HepG2 (cell line): ENCODE measurements at regions of chr10 and their contacts with region 1.

Region 1: GRCh38 chr10:45672181-45673073 is at the start of gene ZFAND4:
- DNase-seq: peak; percentile 93
- ATAC-seq: peak; percentile 97
- H3K4me3 ChIP-seq: peak within 1 kb of the TSS; percentile 62 to 84 (median 82)
- H3K27ac ChIP-seq: peak within 1 kb of the TSS; percentile 80
- H3K4me1 ChIP-seq: peaks cover 23% of the 10 kb centered on the region
- H3K27me3 ChIP-seq: no peaks in the 10 kb centered on the region
- CTCF ChIP-seq: peak; percentile 81
- EP300 ChIP-seq: peak; percentile 17 to 24; a peak in 2 of 4 replicates
- POLR2A ChIP-seq: peak; percentile 53 to 55
- RAD21 ChIP-seq: peak; percentile 100
- total RNA-seq, gene ZFAND4: 9.2 and 9.7 TPM in 2 replicates

Region 2: GRCh38 chr10:45235798-45236231 is 436.6 kb before region 1 on chr10:
- CTCF ChIA-PET with region 1: no interaction called
- POLR2A ChIA-PET with region 1: no interaction called
- in situ Hi-C with region 1: loop called (anchors 25 kb)
- intact Hi-C with region 1: loop called (anchors 2 kb)
- DNase-seq: no peak
- ATAC-seq: peak; percentile 63
- H3K4me3 ChIP-seq: no peak overlapping the region
- H3K27ac ChIP-seq: no peak overlapping the region
- H3K4me1 ChIP-seq: peaks cover 7% of the 10 kb centered on the region; the same call in 1 of the 2 replicates
- H3K27me3 ChIP-seq: peaks cover 0 to 15% of the 10 kb centered on the region in 2 experiments; a peak in 3 of 5 replicates
- CTCF ChIP-seq: no peak
- EP300 ChIP-seq: no peak
- POLR2A ChIP-seq: no peak
- RAD21 ChIP-seq: no peak

Region 3: GRCh38 chr10:45249978-45250693 is 422.3 kb before region 1 on chr10:
- CTCF ChIA-PET with region 1: no interaction called
- POLR2A ChIA-PET with region 1: no interaction called
- in situ Hi-C with region 1: loop called (anchors 25 kb)
- intact Hi-C with region 1: no loop called
- DNase-seq: peak; percentile 53
- ATAC-seq: peak; percentile 35; the same call in 2 of the 3 replicates
- H3K4me3 ChIP-seq: no peak overlapping the region
- H3K27ac ChIP-seq: no peak overlapping the region
- H3K4me1 ChIP-seq: peaks cover 8% of the 10 kb centered on the region; the same call in 1 of the 2 replicates
- H3K27me3 ChIP-seq: no peaks in the 10 kb centered on the region
- CTCF ChIP-seq: peak; percentile 62
- EP300 ChIP-seq: no peak
- POLR2A ChIP-seq: no peak
- RAD21 ChIP-seq: no peak

Region 4: DNA sequence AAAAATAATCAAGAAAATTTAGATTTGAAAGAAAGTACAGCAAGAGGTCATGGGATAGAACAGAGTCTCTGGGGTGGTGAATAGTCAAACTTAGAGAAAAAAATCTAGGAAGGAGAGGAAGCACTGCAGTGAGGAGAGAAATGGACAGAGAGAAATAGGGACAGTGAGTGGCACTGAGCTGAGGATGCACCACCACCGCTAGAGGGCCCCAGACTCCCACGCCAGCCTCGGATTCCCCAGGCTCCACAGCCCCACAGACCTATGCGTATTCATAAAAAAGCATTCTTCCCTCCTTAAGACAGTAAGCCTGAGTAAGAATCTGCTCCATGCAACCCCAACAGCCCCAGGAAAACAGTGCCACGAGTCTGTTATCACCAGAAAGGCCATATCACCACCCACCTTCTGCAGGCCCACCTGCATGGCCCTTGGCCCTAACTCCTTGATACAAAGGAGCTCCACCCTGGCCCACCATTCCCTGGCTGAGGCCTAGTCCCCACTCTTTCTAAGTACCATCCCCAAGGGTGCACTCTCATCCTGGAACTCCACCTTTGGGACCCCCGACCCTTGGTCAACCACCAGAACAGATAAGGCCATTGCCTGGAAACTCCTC is 207.4 kb before region 1 on chr10:
- CTCF ChIA-PET with region 1: interaction called, 27 read pairs
- POLR2A ChIA-PET with region 1: interaction called, 4 read pairs
- in situ Hi-C with region 1: loop called (anchors 5 kb)
- intact Hi-C with region 1: loop called (anchors 1 kb)
- DNase-seq: peak; percentile 43
- ATAC-seq: peak; percentile 99
- H3K4me3 ChIP-seq: no peak overlapping the region
- H3K27ac ChIP-seq: no peak overlapping the region
- H3K4me1 ChIP-seq: peaks cover 8% of the 10 kb centered on the region
- H3K27me3 ChIP-seq: no peaks in the 10 kb centered on the region
- CTCF ChIP-seq: peak; percentile 91
- EP300 ChIP-seq: no peak
- POLR2A ChIP-seq: no peak
- RAD21 ChIP-seq: peak; percentile 92

Region 5: DNA sequence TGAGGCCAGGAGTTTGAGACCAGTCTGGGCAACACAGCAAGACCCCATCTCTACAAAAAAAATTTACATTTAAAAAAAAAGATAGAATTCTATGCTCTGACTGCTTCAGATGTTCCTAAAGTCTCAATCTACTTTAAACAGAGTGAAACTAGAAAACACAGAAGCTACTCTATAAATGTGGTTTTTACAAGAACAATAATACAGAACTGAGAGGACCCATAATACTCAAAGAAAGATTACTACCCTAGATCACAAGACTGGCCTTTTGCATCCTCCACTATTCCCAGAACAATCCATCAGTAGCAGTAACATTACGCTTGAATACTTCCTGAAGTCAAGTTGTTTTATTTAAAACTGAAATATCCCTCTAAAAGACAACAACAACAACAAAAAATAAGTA is 119.3 kb before region 1 on chr10:
- CTCF ChIA-PET with region 1: no interaction called
- POLR2A ChIA-PET with region 1: no interaction called
- in situ Hi-C with region 1: no loop called
- intact Hi-C with region 1: no loop called
- DNase-seq: no peak
- ATAC-seq: no peak
- H3K4me3 ChIP-seq: no peak overlapping the region
- H3K27ac ChIP-seq: no peak overlapping the region
- H3K4me1 ChIP-seq: peaks cover 12% of the 10 kb centered on the region
- H3K27me3 ChIP-seq: no peaks in the 10 kb centered on the region
- CTCF ChIP-seq: no peak
- EP300 ChIP-seq: no peak
- POLR2A ChIP-seq: no peak
- RAD21 ChIP-seq: no peak

Region 6: DNA sequence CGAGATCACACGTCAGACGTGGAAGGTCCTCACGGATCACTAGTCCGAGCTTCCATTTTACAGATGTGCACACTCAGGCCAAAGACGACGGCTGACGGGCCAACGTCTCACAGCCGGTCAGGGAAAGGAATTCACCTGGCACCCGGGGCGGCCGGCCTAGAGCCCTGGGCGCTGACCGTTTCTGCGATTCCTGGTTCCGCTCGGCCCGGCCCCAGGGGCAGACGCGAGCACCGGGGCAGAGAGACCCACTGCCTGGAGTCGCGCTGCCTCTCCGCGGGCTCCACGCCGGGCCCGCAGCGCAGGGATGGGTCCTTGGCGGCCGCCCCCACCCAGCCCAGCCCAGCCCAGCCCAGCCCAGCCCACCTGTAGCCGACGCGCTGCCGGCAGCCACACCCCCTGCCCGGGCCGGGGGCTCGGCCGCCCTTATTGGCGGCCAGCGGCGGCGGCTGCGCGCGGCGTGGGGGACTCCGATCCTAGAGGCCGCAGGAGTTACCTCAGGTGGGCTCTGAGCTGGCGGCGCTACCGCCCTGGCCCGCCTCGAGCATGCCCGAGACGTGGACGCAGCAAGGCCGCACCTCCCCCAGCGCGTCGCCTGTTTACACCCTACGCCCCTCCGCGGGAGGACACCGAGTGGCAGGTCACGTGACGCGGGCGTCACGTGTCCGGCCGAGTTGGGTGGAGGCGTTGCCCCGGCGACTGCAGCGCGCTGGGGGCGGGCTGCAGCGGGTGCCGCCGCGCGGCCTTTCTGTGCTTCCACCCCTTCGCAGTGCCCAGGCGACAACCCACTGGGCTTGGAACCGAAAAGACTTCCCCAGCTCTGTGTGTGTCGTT is 77.9 kb before region 1 on chr10:
- CTCF ChIA-PET with region 1: no interaction called
- POLR2A ChIA-PET with region 1: no interaction called
- in situ Hi-C with region 1: no loop called
- intact Hi-C with region 1: loop called (anchors 5 kb)
- DNase-seq: peak; percentile 90
- ATAC-seq: peak; percentile 92
- H3K4me3 ChIP-seq: peak overlapping the region; percentile 81 to 92 (median 88)
- H3K27ac ChIP-seq: peak overlapping the region; percentile 77
- H3K4me1 ChIP-seq: peaks cover 64% of the 10 kb centered on the region
- H3K27me3 ChIP-seq: no peaks in the 10 kb centered on the region; a peak in 1 of 5 replicates
- CTCF ChIP-seq: peak; percentile 55
- EP300 ChIP-seq: peak in 1 of 2 experiments; percentile 72; a peak in 2 of 4 replicates
- POLR2A ChIP-seq: peak; percentile 58 to 76
- RAD21 ChIP-seq: peak; percentile 75